ENCODE measurements at regions of chr2 and their contacts with region 1.

Region 1: DNA sequence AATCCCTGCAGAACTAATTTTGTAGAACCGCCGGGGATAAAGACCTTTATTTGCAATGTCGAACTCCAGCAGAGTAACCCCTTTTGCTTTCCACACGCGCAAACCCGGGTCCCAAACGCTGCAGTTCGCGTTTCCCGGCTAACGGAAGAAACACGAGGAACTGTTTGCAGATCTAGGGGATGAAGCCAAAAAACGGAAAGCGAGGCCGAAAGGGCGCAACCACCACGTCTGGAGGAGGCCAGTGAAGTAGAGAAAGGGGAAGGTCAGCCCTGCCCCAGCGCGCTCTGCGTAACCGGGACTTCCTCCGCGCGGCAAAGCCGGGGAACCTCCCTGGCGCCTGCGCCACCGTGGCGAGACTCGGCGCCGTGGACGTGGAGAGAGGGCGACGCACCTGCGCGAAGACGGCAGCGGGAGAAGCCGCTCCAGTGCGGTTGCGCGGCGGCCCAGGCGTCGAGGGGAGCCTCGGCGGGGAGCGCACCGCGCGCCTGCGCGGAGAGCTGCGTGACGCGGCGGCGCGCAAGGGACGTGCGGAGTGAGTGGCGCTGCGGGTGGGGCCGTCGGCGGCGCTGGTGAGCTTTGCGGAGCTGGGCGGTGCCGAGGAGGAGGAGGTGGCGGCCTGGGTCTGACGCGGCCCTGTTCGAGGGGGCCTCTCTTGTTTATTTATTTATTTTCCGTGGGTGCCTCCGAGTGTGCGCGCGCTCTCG is at the start of gene PPP1CB:
- DNase-seq: peak; percentile 97
- H3K4me3 ChIP-seq: peak within 1 kb of the TSS; percentile 97
- H3K27ac ChIP-seq: peak within 1 kb of the TSS; percentile 100
- H3K4me1 ChIP-seq: peaks cover 65% of the 10 kb centered on the region
- H3K27me3 ChIP-seq: no peaks in the 10 kb centered on the region
- CTCF ChIP-seq: peak; percentile 50
- total RNA-seq, gene PPP1CB: 461 TPM

Region 2: GRCh38 chr2:28594289-28595108 is 156.9 kb before region 1 on chr2:
- intact Hi-C with region 1: loop called (anchors 10 kb)
- DNase-seq: peak; percentile 88
- H3K4me3 ChIP-seq: peak overlapping the region; percentile 46
- H3K27ac ChIP-seq: peak overlapping the region; percentile 95
- H3K4me1 ChIP-seq: peaks cover 48% of the 10 kb centered on the region
- H3K27me3 ChIP-seq: no peaks in the 10 kb centered on the region
- CTCF ChIP-seq: peak; percentile 86

Region 3: DNA sequence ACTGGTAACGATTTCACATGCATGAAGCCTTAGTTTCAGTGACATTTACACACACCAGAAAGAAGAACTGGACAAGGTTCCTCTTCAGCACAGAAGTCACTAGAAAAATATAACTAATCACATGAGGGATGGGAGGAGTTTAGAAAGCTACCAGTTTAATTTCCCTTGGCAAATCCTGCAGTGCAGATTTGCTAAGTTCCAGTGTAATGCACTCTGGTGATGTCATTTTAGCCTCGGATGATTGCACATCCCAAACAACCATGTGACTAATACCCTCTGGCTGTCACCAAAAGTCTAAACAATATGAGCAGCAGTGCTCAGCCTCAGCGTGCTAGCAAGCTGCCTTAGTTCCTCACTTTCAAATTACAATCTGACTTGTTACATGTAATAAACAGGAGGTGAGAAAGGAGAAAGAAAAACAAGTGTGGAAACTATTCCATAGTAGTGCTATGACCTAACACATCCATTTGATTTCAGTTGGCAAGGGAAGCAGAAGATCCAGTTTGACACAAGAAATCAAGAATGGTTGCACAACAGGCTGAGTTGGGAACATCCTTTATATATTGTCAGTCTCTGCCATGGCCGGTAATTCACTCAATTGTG is 35.0 kb before region 1 on chr2:
- intact Hi-C with region 1: loop called (anchors 2 kb)
- DNase-seq: no peak
- H3K4me3 ChIP-seq: no peak overlapping the region
- H3K27ac ChIP-seq: peak overlapping the region; percentile 73
- H3K4me1 ChIP-seq: peaks cover 19% of the 10 kb centered on the region
- H3K27me3 ChIP-seq: no peaks in the 10 kb centered on the region
- CTCF ChIP-seq: no peak

Region 4: DNA sequence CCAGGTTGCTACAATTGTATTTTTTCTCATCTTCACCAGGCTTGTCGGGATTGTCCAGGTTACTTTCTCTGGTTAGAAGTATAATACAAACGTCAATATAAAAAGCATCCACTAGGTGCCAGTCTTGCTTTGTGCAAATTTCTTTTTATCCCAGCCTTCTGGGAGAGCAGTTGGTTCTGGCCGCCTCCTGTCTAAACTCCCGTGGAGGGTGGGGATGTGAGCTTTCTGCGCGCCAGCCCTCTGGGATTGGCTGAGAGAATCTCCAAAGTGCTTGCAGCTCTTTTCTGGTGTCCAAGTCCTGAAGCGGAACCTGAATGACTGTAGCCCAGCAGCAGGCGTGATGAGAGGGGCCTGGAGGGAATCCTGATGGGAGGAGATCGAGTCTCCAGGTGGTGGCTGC is 207.3 kb after region 1 on chr2:
- intact Hi-C with region 1: no loop called
- DNase-seq: peak; percentile 58
- H3K4me3 ChIP-seq: peak overlapping the region; percentile 15
- H3K27ac ChIP-seq: peak overlapping the region; percentile 48
- H3K4me1 ChIP-seq: peaks cover 33% of the 10 kb centered on the region
- H3K27me3 ChIP-seq: peaks cover 9% of the 10 kb centered on the region
- CTCF ChIP-seq: peak; percentile 71

Region 5: GRCh38 chr2:29010946-29011345 is 259.5 kb after region 1 on chr2:
- intact Hi-C with region 1: no loop called
- DNase-seq: peak; percentile 49
- H3K4me3 ChIP-seq: peak overlapping the region; percentile 32
- H3K27ac ChIP-seq: peak overlapping the region; percentile 96
- H3K4me1 ChIP-seq: peaks cover 60% of the 10 kb centered on the region
- H3K27me3 ChIP-seq: no peaks in the 10 kb centered on the region
- CTCF ChIP-seq: no peak